ENCODE measurements at regions of chr6 and their contacts with region 1.

Region 1: GRCh38 chr6:38660313-38660712 is 20.6 kb upstream of the BTBD9 start:
- DNase-seq: no peak
- ATAC-seq: no peak
- H3K4me3 ChIP-seq: no peak overlapping the region
- H3K27ac ChIP-seq: no peak overlapping the region
- H3K4me1 ChIP-seq: peaks cover 0 to 2% of the 10 kb centered on the region in 2 donors
- H3K27me3 ChIP-seq: no peaks in the 10 kb centered on the region

Region 2: DNA sequence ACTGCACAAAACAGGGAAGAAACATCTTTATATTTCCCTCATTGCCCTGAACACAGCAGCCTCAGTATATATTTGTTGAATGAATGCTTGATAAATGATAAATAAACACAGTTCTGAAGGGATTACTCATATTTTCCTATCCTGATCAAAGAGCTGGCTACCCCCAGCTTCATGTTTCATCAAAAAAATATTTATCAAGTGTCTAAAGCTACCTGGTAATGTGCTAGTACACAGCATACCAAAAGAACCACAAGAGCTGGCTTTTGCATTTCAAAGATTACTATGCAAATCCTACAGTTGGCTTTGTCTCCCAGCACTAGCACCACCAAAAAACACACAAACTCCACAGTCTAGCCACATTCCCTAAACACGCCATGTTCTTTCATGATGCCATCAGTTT is 150.6 kb before region 1 on chr6:
- intact Hi-C with region 1: loop called in 1 of 2 experiments (anchors 10 kb)
- DNase-seq: no peak
- ATAC-seq: no peak
- H3K4me3 ChIP-seq: no peak overlapping the region
- H3K27ac ChIP-seq: no peak overlapping the region
- H3K4me1 ChIP-seq: peaks cover 0 to 7% of the 10 kb centered on the region in 2 donors
- H3K27me3 ChIP-seq: no peaks in the 10 kb centered on the region

Measured in aorta (tissue), 5 donors.